ENCODE measurements at regions of chr18 and their contacts with region 1.

Region 1: DNA sequence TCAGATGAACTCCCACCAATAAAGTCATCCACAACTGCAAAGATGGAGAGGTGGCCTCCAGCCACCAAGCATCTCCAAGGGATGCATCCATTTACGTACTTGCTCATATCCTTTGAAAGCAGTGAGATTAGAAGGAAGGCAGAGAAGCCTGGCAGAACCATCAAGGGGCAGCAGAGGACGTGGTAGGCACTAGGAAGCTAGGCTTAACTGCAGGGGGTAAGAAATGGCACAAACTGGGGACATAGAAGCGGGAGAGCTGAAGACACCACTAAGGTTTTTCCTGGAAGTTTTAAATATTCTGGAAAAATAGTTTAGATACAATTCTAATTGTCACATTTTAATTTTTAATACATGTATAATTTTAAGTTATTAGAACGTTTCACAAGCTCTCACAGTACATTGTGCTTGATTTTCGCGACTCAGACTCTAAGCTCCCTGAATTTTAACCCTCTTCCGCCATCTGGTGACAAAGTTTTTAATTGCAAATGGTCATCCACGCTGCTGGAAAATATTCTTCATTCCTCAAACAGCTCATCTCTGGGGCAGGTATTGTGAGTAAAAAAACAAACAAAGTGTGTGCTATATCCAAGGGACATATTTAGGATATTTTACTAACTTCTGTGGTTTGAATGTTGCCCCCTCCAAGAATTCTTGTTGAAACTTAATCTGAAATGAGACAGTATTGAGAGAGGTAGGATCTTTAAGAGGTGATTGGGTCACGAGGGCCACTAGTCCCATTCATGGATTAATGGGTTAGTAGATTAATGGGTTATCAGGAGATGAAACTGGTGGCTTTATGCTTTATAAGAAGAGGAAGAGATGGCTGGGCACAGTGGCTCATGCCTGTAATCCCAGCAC is 1.6 kb upstream of the PSTPIP2 start:
- DNase-seq: peak; percentile 82
- ATAC-seq: peak; percentile 70
- H3K4me3 ChIP-seq: no peak overlapping the region
- H3K27ac ChIP-seq: no peak overlapping the region
- H3K4me1 ChIP-seq: no peaks in the 10 kb centered on the region
- H3K27me3 ChIP-seq: no peaks in the 10 kb centered on the region
- CTCF ChIP-seq: peak; percentile 59

Region 2: GRCh38 chr18:45260125-45260524 is 813.6 kb before region 1 on chr18:
- CTCF ChIA-PET with region 1: no interaction called
- POLR2A ChIA-PET with region 1: no interaction called
- in situ Hi-C with region 1: no loop called
- intact Hi-C with region 1: no loop called
- DNase-seq: no peak
- ATAC-seq: no peak
- H3K4me3 ChIP-seq: no peak overlapping the region
- H3K27ac ChIP-seq: no peak overlapping the region
- H3K4me1 ChIP-seq: no peaks in the 10 kb centered on the region
- H3K27me3 ChIP-seq: no peaks in the 10 kb centered on the region
- CTCF ChIP-seq: no peak

Region 3: GRCh38 chr18:45806226-45806625 is 267.5 kb before region 1 on chr18:
- CTCF ChIA-PET with region 1: no interaction called
- POLR2A ChIA-PET with region 1: no interaction called
- in situ Hi-C with region 1: no loop called
- intact Hi-C with region 1: no loop called
- DNase-seq: no peak
- ATAC-seq: no peak
- H3K4me3 ChIP-seq: no peak overlapping the region
- H3K27ac ChIP-seq: no peak overlapping the region; the same call in 1 of the 2 replicates
- H3K4me1 ChIP-seq: 0 out of 2 replicates have a peak, but pooled peaks cover 3% of the 10 kb centered on the region
- H3K27me3 ChIP-seq: no peaks in the 10 kb centered on the region
- CTCF ChIP-seq: no peak

Region 4: DNA sequence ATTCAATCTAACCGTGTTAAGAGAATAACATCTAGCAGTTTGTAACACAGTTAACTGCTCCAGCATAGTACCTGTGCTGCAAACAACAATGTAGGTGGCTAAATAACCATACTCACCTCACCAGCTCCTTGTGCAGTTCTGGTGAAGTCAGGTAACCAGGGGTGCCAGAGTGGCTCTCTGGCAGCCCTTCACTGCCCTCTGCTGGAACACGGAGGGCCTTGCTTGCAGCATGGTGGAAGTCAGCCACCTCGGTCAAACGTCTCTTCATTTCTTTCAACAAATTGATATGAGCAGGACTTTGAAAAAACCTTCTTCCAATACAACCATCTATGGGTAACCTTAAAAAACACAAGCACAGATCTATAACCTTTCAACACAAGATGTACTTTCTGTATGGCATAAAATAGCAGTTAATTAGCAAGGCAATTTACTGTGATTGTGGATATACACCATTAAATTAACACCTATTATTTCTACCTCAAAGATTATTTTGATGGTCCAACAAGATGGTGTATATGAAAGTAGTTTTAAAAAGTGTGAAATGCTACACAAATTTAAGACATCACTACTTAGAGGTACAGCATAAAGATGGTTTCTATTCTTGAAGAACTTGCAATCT is 163.2 kb before region 1 on chr18:
- CTCF ChIA-PET with region 1: interaction called, 18 read pairs
- POLR2A ChIA-PET with region 1: no interaction called
- in situ Hi-C with region 1: no loop called
- intact Hi-C with region 1: no loop called
- DNase-seq: peak; percentile 32
- ATAC-seq: peak; percentile 91
- H3K4me3 ChIP-seq: no peak overlapping the region
- H3K27ac ChIP-seq: no peak overlapping the region
- H3K4me1 ChIP-seq: no peaks in the 10 kb centered on the region
- H3K27me3 ChIP-seq: no peaks in the 10 kb centered on the region
- CTCF ChIP-seq: peak; percentile 78

Region 5: GRCh38 chr18:45974088-45974536 is 99.6 kb before region 1 on chr18:
- CTCF ChIA-PET with region 1: no interaction called
- POLR2A ChIA-PET with region 1: no interaction called
- in situ Hi-C with region 1: no loop called
- intact Hi-C with region 1: loop called (anchors 5 kb)
- DNase-seq: no peak
- ATAC-seq: peak; percentile 83
- H3K4me3 ChIP-seq: peak overlapping the region in 1 of 2 experiments; percentile 23; a peak in 1 of 4 replicates
- H3K27ac ChIP-seq: no peak overlapping the region
- H3K4me1 ChIP-seq: no peaks in the 10 kb centered on the region
- H3K27me3 ChIP-seq: no peaks in the 10 kb centered on the region
- CTCF ChIP-seq: peak; percentile 66

Region 6: DNA sequence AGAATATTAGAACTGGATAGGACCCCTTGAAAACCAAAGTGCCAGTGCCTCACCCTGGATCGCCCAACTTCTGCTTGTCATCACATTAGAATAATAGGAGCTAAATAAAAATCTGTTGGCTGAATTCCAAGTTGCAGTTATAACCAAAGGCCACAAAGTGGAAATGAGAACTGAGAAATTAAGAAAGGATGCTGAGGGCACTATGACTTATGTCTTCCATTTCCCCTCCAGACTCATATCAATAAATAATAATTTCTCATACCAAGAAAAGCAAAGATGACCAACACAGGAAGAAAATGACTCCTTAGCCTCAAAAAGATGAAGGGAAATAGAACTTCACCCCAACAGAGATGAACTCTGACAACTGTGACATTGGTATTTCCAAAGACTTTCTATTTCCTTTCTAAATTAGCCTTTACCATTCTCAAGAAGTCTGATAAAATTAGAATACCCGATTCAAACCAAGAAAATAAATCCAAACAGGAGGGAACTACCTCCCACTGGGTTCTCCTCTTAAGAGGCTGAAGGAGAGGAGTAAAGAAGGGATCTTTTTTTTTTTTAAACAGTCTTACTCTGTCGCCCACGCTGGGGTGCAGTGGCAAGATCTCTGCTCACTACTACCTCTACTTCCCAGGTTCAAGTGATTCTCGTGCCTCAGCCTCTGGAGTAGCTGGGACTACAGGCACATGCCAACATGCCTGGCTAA is 60.1 kb before region 1 on chr18:
- CTCF ChIA-PET with region 1: no interaction called
- POLR2A ChIA-PET with region 1: no interaction called
- in situ Hi-C with region 1: no loop called
- intact Hi-C with region 1: no loop called
- DNase-seq: no peak
- ATAC-seq: no peak
- H3K4me3 ChIP-seq: no peak overlapping the region
- H3K27ac ChIP-seq: no peak overlapping the region
- H3K4me1 ChIP-seq: no peaks in the 10 kb centered on the region
- H3K27me3 ChIP-seq: no peaks in the 10 kb centered on the region
- CTCF ChIP-seq: no peak

Region 7: GRCh38 chr18:46096651-46097300 is 23.1 kb after region 1 on chr18:
- CTCF ChIA-PET with region 1: no interaction called
- POLR2A ChIA-PET with region 1: interaction called, 12 read pairs
- in situ Hi-C with region 1: no loop called
- intact Hi-C with region 1: no loop called
- DNase-seq: no peak
- ATAC-seq: no peak
- H3K4me3 ChIP-seq: peak overlapping the region; percentile 78 to 85
- H3K27ac ChIP-seq: peak overlapping the region; percentile 92
- H3K4me1 ChIP-seq: peaks cover 10% of the 10 kb centered on the region
- H3K27me3 ChIP-seq: no peaks in the 10 kb centered on the region
- CTCF ChIP-seq: no peak

Region 8: GRCh38 chr18:46134920-46135675 is 61.4 kb after region 1 on chr18:
- CTCF ChIA-PET with region 1: no interaction called
- POLR2A ChIA-PET with region 1: no interaction called
- in situ Hi-C with region 1: no loop called
- intact Hi-C with region 1: no loop called
- DNase-seq: no peak
- ATAC-seq: no peak
- H3K4me3 ChIP-seq: no peak overlapping the region
- H3K27ac ChIP-seq: no peak overlapping the region
- H3K4me1 ChIP-seq: no peaks in the 10 kb centered on the region
- H3K27me3 ChIP-seq: no peaks in the 10 kb centered on the region
- CTCF ChIP-seq: no peak

Measured in Panc1 (cell line).